Posterior vena cava (tissue), 2 donors: ENCODE measurements at regions of chr10 and their contacts with region 1.

Region 1: GRCh38 chr10:89185658-89186057 is 21.5 kb downstream of the CH25H start:
- DNase-seq: no peak

Region 2: DNA sequence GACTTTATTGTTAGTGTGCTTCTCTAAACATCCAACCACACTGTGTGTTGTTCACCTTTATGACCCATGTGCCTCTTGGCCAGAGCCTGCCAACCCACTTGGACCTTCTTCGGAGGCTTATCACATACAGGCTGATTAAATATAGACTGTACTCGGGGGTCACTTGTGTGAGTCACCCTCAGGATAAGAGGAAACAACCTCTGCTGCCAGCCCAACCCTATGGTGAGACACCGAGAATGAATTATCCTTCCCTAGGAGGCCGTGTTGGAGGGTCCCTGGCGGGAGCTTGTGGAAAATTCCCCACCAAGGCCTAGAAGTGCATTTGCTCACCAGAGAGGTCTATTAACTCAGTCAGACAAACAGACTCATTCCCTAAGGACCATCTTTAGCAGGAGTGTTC is 132.1 kb before region 1 on chr10:
- intact Hi-C with region 1: loop called in 1 of 2 experiments (anchors 5 kb)
- DNase-seq: no peak